Naive thymus-derived CD4-positive, alpha-beta T cell (primary cell): ENCODE measurements at regions of chr2 and their contacts with region 1.

Region 1: DNA sequence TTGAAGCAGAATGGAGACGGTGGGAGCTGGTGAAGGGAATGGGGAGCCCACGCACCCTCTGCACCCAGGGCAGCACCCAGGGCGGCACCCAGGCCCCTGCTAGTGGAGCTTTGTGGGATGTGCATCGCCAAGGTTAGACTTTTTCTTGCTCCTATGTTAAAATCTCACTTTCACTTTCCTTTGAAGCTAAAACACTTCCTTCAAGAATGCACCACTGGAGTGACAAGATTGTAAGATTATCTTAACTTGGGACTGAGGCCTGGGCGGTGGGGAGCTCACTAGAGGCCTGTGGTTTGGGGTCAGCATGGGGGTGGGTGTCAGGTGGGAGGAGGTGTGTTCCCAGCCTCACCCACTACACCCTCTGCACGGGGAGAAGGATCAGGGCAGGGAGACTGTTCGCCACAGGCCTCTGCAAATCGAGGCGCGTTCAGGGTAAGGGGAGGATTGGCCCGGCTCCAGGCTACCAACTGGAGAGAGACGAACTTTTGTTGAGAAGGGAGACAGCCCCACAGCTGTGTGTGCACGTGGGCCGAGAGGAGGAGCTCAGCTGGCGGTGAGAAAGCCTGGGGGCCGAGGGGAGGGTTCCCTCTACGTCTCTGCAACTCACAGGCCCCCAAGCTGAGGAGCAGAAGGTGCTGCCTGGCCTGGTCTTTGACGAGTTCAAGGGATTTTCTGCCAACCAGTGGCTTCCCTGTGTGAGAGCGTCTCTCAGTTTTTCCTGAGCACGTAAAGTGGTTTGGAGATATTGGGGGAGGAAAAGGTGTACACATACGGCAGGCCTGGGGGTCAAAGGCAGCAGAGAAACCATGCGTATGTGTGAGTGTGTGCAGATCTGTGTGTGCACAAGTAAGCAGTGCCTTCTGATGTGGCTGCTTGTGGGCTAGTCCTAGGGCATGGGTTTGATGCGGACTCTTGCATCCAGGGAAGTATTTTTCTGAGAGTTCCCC is 147.7 kb downstream of the KLHL29 start:
- DNase-seq: peak; percentile 30 to 71 (median 64)
- ATAC-seq: peak; percentile 74
- H3K4me3 ChIP-seq: peak overlapping the region; percentile 72
- H3K4me3 Mint-ChIP-seq: peak overlapping the region; percentile 90 to 99 (median 95)
- H3K27ac ChIP-seq: peak overlapping the region; percentile 66
- H3K27ac Mint-ChIP-seq: peak overlapping the region; percentile 94 to 99 (median 98)
- H3K4me1 ChIP-seq: peaks cover 13 to 32% of the 10 kb centered on the region in 2 donors
- H3K4me1 Mint-ChIP-seq: peaks cover 39 to 68% (median 59%) of the 10 kb centered on the region in 7 donors
- H3K27me3 ChIP-seq: no peaks in the 10 kb centered on the region
- H3K27me3 Mint-ChIP-seq: no peaks in the 10 kb centered on the region

Region 2: GRCh38 chr2:23366720-23367119 is 165.9 kb before region 1 on chr2:
- CTCF ChIA-PET with region 1: no interaction called
- POLR2A ChIA-PET with region 1: no interaction called
- intact Hi-C with region 1: loop called in 1 of 2 experiments (anchors 1 kb)
- DNase-seq: peak in 1 of 9 donors; percentile 8
- ATAC-seq: no peak
- H3K4me3 ChIP-seq: no peak overlapping the region
- H3K4me3 Mint-ChIP-seq: no peak overlapping the region
- H3K27ac ChIP-seq: no peak overlapping the region
- H3K27ac Mint-ChIP-seq: no peak overlapping the region
- H3K4me1 ChIP-seq: no peaks in the 10 kb centered on the region
- H3K4me1 Mint-ChIP-seq: peaks cover 0 to 5% (median 2%) of the 10 kb centered on the region in 7 donors
- H3K27me3 ChIP-seq: no peaks in the 10 kb centered on the region
- H3K27me3 Mint-ChIP-seq: peaks cover 12 to 51% (median 35%) of the 10 kb centered on the region in 5 donors

Region 3: DNA sequence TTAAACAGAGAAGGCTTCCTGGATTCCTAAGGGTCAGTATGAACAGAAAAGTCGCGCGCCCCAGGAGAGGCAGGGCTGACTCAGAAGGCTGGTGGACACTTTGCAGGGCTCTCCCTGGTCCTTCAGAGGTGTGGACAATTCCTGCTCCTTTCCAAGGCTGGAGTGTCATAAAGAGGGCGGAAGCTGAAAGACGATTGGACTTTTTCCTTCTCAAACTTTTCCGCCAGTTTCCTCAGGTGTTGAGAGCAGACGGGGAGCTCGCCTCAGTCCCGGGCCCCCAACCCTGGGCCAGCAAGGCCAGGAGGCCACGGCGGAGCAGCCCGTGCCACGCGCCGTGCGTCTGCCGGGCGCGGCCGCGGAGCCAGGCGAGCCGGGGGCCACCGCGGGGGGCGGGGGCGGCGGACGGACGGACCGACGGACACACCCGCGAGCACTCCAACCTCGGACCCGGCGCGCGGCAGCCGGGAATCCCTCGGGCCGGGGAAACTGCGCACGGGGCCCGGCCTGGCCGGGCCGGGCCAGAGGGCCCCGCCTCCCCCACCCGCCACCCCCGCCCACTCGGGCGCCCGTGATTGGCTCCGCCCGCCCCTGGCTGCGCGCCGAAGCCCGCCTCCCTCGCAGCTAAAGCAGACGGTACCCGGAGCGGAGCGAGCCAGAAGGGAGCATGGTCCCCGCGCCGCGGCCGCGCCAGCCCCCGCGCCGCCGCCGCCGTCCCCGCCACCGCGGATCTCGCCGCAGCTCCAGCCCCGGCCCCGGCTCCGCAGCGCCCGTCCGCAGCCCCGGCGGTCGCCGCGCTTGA is 147.9 kb before region 1 on chr2 and contains the start of gene KLHL29:
- CTCF ChIA-PET with region 1: no interaction called
- POLR2A ChIA-PET with region 1: interaction called, 6 read pairs
- intact Hi-C with region 1: loop called (anchors 1 to 5 kb)
- DNase-seq: peak; percentile 56 to 79 (median 72)
- ATAC-seq: peak; percentile 88
- H3K4me3 ChIP-seq: peak within 1 kb of the TSS; percentile 46
- H3K4me3 Mint-ChIP-seq: peak within 1 kb of the TSS; percentile 85 to 97 (median 90)
- H3K27ac ChIP-seq: no peak within 1 kb of the TSS
- H3K27ac Mint-ChIP-seq: peak within 1 kb of the TSS in 8 of 9 donors; percentile 76 to 96 (median 84)
- H3K4me1 ChIP-seq: peaks cover 0 to 24% of the 10 kb centered on the region in 2 donors
- H3K4me1 Mint-ChIP-seq: peaks cover 17 to 41% (median 35%) of the 10 kb centered on the region in 7 donors
- H3K27me3 ChIP-seq: peaks cover 0 to 2% of the 10 kb centered on the region in 2 donors
- H3K27me3 Mint-ChIP-seq: peaks cover 23 to 77% (median 40%) of the 10 kb centered on the region in 5 donors
- total RNA-seq, gene KLHL29: 5.4 to 6.5 (median 6.2) TPM

Region 4: GRCh38 chr2:23452853-23453420 is 79.7 kb before region 1 on chr2:
- CTCF ChIA-PET with region 1: no interaction called
- POLR2A ChIA-PET with region 1: interaction called, 4 read pairs
- intact Hi-C with region 1: loop called in 1 of 2 experiments (anchors 10 kb)
- DNase-seq: peak in 7 of 9 donors; percentile 55 to 74 (median 69)
- ATAC-seq: peak; percentile 83
- H3K4me3 ChIP-seq: peak overlapping the region; percentile 22
- H3K4me3 Mint-ChIP-seq: peak overlapping the region; percentile 46 to 85 (median 77)
- H3K27ac ChIP-seq: no peak overlapping the region
- H3K27ac Mint-ChIP-seq: peak overlapping the region; percentile 48 to 91 (median 78)
- H3K4me1 ChIP-seq: peaks cover 9 to 29% of the 10 kb centered on the region in 2 donors
- H3K4me1 Mint-ChIP-seq: peaks cover 18 to 48% (median 41%) of the 10 kb centered on the region in 7 donors
- H3K27me3 ChIP-seq: no peaks in the 10 kb centered on the region
- H3K27me3 Mint-ChIP-seq: peaks cover 4 to 17% (median 6%) of the 10 kb centered on the region in 5 donors

Region 5: DNA sequence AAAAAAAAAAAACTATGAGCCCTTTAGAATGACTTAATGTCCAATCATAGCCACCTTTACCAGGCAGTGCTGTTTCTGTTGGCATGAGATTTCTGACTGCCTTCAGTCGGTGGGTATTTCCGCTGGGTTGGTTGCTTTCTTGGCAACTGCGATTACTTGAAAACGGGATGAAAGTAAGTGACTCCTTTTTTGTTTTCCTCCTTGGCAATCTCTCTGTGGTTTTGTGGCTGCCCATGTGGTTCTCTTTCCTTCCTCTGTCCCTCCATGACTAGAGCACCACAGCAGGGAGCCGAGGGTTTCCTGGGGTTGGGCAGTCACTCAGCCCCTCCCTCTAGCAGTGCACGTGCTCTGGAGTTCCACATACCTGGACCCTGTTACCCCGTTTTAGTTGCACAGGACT is 35.6 kb before region 1 on chr2:
- CTCF ChIA-PET with region 1: interaction called, 3 read pairs
- POLR2A ChIA-PET with region 1: interaction called, 3 read pairs
- intact Hi-C with region 1: loop called in 1 of 2 experiments (anchors 2 kb)
- DNase-seq: peak in 8 of 9 donors; percentile 11 to 46 (median 28)
- ATAC-seq: peak; percentile 61
- H3K4me3 ChIP-seq: no peak overlapping the region
- H3K4me3 Mint-ChIP-seq: peak overlapping the region; percentile 26 to 79 (median 62)
- H3K27ac ChIP-seq: no peak overlapping the region
- H3K27ac Mint-ChIP-seq: peak overlapping the region in 5 of 9 donors; percentile 35 to 69 (median 42)
- H3K4me1 ChIP-seq: peaks cover 0 to 30% of the 10 kb centered on the region in 2 donors
- H3K4me1 Mint-ChIP-seq: peaks cover 20 to 55% (median 29%) of the 10 kb centered on the region in 7 donors
- H3K27me3 ChIP-seq: no peaks in the 10 kb centered on the region
- H3K27me3 Mint-ChIP-seq: peaks cover 0 to 18% (median 0%) of the 10 kb centered on the region in 5 donors